Tibial artery (tissue), 4 donors: ENCODE measurements at regions of chr6 and their contacts with region 1.

Region 1: GRCh38 chr6:96626759-96627364 is 63.9 kb downstream of the FHL5 start:
- DNase-seq: no peak
- H3K4me3 ChIP-seq: no peak overlapping the region
- H3K27ac ChIP-seq: peak overlapping the region in 1 of 2 donors; percentile 65
- H3K4me1 ChIP-seq: peaks cover 0 to 54% (median 2%) of the 10 kb centered on the region in 4 donors
- H3K27me3 ChIP-seq: no peaks in the 10 kb centered on the region
- CTCF ChIP-seq: peak; percentile 33 to 46

Region 2: GRCh38 chr6:96460052-96460700 is 166.7 kb before region 1 on chr6:
- intact Hi-C with region 1: no loop called
- DNase-seq: no peak
- H3K4me3 ChIP-seq: no peak overlapping the region
- H3K27ac ChIP-seq: no peak overlapping the region
- H3K4me1 ChIP-seq: no peaks in the 10 kb centered on the region
- H3K27me3 ChIP-seq: no peaks in the 10 kb centered on the region
- CTCF ChIP-seq: no peak

Region 3: GRCh38 chr6:96554559-96554958 is 72.3 kb before region 1 on chr6:
- intact Hi-C with region 1: no loop called
- DNase-seq: no peak
- H3K4me3 ChIP-seq: no peak overlapping the region
- H3K27ac ChIP-seq: no peak overlapping the region
- H3K4me1 ChIP-seq: peaks cover 0 to 8% (median 0%) of the 10 kb centered on the region in 4 donors
- H3K27me3 ChIP-seq: no peaks in the 10 kb centered on the region
- CTCF ChIP-seq: no peak

Region 4: GRCh38 chr6:96704713-96705112 is 77.9 kb after region 1 on chr6:
- intact Hi-C with region 1: no loop called
- DNase-seq: no peak
- H3K4me3 ChIP-seq: no peak overlapping the region
- H3K27ac ChIP-seq: no peak overlapping the region
- H3K4me1 ChIP-seq: no peaks in the 10 kb centered on the region
- H3K27me3 ChIP-seq: no peaks in the 10 kb centered on the region
- CTCF ChIP-seq: no peak

Region 5: DNA sequence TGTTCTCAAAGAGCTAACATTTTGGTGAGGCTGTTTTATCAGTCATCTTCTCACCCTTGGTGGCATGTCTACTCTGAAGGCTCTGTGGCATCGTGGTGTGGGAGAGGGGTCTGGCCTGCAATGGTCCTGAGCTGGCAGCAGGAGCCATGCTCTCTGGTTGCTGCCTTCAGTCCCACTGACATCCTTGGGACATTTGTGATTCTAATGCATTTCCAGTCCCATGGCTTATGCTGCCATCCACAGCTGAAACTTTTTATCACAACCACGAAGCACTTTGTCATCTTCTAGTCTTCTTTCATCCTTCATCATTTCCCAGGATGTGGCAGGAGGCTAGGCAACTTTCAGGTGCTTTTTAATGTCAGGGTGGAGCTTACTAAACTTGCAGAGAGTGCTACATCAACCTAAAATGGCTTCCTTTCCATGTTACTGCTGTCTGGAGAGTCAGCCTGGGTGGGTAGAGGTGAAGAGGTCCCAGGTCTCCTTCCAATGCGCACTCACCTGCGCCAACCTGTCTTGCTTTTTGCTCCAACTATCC is 133.4 kb after region 1 on chr6:
- intact Hi-C with region 1: loop called (anchors 5 kb)
- DNase-seq: no peak
- H3K4me3 ChIP-seq: no peak overlapping the region
- H3K27ac ChIP-seq: no peak overlapping the region
- H3K4me1 ChIP-seq: peaks cover 0 to 13% (median 0%) of the 10 kb centered on the region in 4 donors
- H3K27me3 ChIP-seq: no peaks in the 10 kb centered on the region
- CTCF ChIP-seq: peak; percentile 29 to 34

Region 6: GRCh38 chr6:97059473-97059872 is 432.6 kb after region 1 on chr6:
- intact Hi-C with region 1: loop called (anchors 10 kb)
- DNase-seq: no peak
- H3K4me3 ChIP-seq: no peak overlapping the region
- H3K27ac ChIP-seq: no peak overlapping the region
- H3K4me1 ChIP-seq: peaks cover 0 to 5% (median 2%) of the 10 kb centered on the region in 4 donors
- H3K27me3 ChIP-seq: no peaks in the 10 kb centered on the region
- CTCF ChIP-seq: peak; percentile 49 to 56